Heart left ventricle (tissue), 16 donors: ENCODE measurements at regions of chr1 and their contacts with region 1.

Region 1: GRCh38 chr1:150979092-150980056 is 2.7 kb upstream of the ANXA9 start:
- DNase-seq: peak; percentile 84 to 89 (median 87)
- ATAC-seq: peak; percentile 17 to 60 (median 40)
- H3K4me3 ChIP-seq: peak overlapping the region in 7 of 12 donors; percentile 4 to 48 (median 19)
- H3K27ac ChIP-seq: peak overlapping the region in 6 of 12 donors; percentile 22 to 86 (median 42)
- H3K4me1 ChIP-seq: peaks cover 0 to 49% (median 9%) of the 10 kb centered on the region in 12 donors
- H3K27me3 ChIP-seq: no peaks in the 10 kb centered on the region
- CTCF ChIP-seq: peak; percentile 99 to 100 (median 100)
- POLR2A ChIP-seq: no peak

Region 2: DNA sequence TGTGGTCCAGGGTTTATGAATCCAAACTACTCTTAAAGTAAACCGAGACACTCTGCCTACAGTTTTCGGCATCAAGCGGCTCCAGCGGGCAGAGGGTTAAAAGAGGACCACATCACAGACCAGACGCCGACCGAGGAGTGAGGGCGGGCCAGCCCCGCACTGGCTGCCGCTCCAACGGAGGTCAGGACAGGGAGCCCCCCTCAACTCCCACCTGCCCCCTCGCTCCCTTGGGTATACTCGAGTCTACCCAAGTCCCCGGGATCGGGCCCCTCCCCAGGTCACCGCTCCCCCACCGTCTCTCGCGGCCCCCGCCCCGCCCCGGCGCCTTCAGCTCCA is 103.3 kb before region 1 on chr1:
- intact Hi-C with region 1: loop called in 1 of 10 experiments (anchors 5 kb)
- DNase-seq: no peak
- ATAC-seq: peak; percentile 27 to 73 (median 61)
- H3K4me3 ChIP-seq: peak overlapping the region; percentile 74 to 99 (median 86)
- H3K27ac ChIP-seq: peak overlapping the region; percentile 86 to 100 (median 97)
- H3K4me1 ChIP-seq: peaks cover 0 to 32% (median 11%) of the 10 kb centered on the region in 12 donors
- H3K27me3 ChIP-seq: no peaks in the 10 kb centered on the region
- CTCF ChIP-seq: no peak
- POLR2A ChIP-seq: no peak

Region 3: GRCh38 chr1:150995896-150996295 is 16.5 kb after region 1 on chr1:
- intact Hi-C with region 1: loop called in 2 of 10 experiments (anchors 1 to 2 kb)
- DNase-seq: no peak
- ATAC-seq: peak in 3 of 4 donors; percentile 31 to 58 (median 50)
- H3K4me3 ChIP-seq: peak overlapping the region in 7 of 12 donors; percentile 2 to 40 (median 18)
- H3K27ac ChIP-seq: peak overlapping the region in 10 of 12 donors; percentile 0 to 71 (median 46)
- H3K4me1 ChIP-seq: peaks cover 0 to 25% (median 8%) of the 10 kb centered on the region in 12 donors
- H3K27me3 ChIP-seq: no peaks in the 10 kb centered on the region
- CTCF ChIP-seq: peak; percentile 77 to 90 (median 85)
- POLR2A ChIP-seq: no peak